Posterior vena cava (tissue), 2 donors: ENCODE measurements at regions of chr6 and their contacts with region 1.

Region 1: DNA sequence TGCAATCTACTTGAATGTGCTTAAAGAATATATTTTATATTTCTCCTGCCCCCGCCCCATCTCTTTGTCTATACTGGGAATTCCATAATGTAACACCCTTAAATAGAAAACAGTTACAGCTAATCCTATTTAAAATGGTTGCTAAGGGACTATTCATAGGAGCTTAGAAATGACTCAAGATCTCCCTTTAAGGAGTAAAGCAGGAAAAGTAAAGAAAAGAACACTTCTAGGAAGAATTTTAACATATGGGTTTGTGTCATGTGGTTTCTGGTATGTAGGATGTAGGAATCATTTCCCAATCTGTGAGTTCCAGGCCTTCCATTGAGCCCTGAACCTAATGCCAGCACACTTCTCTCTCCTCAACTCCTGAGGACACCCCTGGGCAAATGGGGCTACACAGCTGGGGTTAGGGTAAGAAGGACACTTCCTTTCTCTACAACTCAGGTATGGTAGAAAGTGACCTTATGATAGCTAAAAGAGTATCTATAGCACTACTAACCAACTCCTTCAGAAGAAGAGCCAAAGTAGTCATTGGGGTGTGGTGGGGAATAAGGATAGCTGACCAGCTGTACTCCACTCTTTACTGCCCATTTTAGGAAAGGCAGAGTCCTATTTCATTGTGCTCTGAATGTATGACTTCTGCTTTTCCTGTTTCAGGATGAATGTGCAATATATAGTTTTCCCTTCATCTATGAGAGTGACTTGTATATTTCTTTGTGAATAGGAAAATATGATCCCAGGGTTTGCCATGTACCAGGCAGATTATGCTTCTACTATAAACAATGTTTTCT is 27.3 kb downstream of the RIMS1 start:
- DNase-seq: no peak

Region 2: GRCh38 chr6:73017476-73017875 is 1103.8 kb after region 1 on chr6:
- intact Hi-C with region 1: loop called in 1 of 2 experiments (anchors 5 kb)
- DNase-seq: no peak